ENCODE measurements at regions of chr19 and their contacts with region 1.

Region 1: DNA sequence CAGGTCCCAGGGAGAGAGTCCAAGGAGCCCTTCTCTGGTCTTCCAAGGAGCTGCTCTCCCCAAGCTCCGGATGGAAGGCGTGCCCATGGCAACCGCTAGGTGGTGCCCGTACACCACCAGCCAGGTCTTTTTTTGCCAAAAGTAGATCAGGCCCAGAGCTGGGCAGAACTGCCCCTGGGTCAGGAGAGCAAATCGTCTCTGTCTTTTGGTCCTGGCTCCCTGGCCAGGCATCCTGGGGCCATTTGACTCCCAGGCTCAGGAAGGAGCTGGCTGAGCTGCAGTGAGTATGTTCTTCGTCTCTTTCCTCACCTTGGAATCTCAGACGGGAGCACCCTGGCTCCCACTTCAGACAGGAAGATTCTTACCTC is 24.6 kb upstream of the BCL3 start:
- DNase-seq: peak; percentile 94

Region 2: GRCh38 chr19:44741841-44742352 is 18.0 kb after region 1 on chr19:
- intact Hi-C with region 1: loop called (anchors 2 kb)
- DNase-seq: peak; percentile 99

Region 3: DNA sequence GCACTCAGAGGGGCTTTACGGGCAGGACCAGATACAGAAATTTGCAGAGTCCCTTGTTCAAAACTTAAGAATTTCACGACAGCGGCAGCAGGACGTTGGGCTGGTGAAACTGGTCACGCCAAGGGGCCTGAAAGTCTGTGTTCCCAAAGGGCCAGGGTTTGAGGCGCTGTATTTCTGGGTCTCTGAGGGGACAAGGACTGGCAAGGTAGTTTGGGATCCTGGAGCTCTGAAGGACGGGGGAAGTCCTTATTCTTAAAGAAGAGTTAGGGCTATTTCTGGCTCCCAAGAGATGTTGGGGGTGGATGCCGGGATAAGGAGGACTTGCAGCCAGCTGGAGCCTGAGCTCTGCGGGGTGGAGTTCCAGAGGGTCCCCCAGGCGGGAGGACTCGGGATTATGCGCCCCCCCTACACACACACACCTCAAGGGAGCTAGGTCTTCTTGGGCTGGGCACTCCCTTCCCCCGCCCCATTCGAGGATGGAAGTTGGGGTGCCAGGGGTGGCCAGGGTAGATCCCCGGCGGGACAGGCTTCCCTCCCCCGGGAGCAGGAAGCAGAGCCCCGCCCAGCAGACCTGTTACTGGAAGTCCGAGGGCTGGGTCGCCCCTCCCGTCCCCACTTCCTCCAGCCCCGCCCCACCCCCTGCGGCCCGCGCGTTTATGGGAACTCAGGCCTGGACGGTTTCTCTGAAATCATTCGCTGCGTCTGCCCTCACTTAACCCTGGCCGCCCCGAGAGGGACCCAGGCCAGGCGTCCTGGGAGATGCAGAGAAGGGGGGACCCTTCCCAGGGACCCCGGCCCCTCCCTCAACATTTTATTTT is 30.2 kb after region 1 on chr19:
- intact Hi-C with region 1: loop called (anchors 2 kb)
- DNase-seq: peak; percentile 98

Region 4: GRCh38 chr19:44770550-44771257 is 46.8 kb after region 1 on chr19:
- intact Hi-C with region 1: loop called (anchors 1 kb)
- DNase-seq: peak; percentile 97

Measured in cardiac septum (tissue), 1 donor.